Mammary epithelial cell (primary cell): ENCODE measurements at regions of chr17 and their contacts with region 1.

Region 1: GRCh38 chr17:4733073-4733531 is 1.9 kb downstream of the MED11 start:
- DNase-seq: no peak
- H3K4me3 ChIP-seq: no peak overlapping the region
- H3K27ac ChIP-seq: no peak overlapping the region
- H3K4me1 ChIP-seq: peaks cover 5% of the 10 kb centered on the region
- H3K27me3 ChIP-seq: no peaks in the 10 kb centered on the region
- CTCF ChIP-seq: no peak

Region 2: DNA sequence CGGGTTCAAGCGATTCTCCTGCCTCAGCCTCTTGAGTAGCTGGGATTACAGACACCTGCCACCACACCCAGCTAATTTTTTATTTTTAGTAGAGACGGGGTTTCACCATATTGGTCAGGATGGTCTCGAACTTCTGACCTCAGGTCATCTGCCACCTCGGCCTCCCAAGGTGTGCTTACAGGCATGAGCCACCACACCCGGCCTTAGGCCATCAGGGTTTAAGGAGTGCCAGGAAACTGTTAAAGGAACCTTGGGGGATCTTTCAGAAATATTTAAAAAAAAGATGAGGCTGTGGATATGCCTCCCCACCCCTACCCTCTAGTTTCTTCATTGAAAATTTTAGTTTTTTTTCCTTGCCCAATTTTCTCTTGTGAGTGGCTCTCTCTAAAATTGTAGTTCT is 335.3 kb before region 1 on chr17:
- CTCF ChIA-PET with region 1: no interaction called
- dilution Hi-C with region 1: no loop called
- in situ Hi-C with region 1: no loop called
- intact Hi-C with region 1: no loop called
- DNase-seq: no peak
- H3K4me3 ChIP-seq: no peak overlapping the region
- H3K27ac ChIP-seq: no peak overlapping the region
- H3K4me1 ChIP-seq: peaks cover 24% of the 10 kb centered on the region
- H3K27me3 ChIP-seq: no peaks in the 10 kb centered on the region
- CTCF ChIP-seq: no peak

Region 3: GRCh38 chr17:4610162-4610561 is 122.9 kb before region 1 on chr17:
- CTCF ChIA-PET with region 1: no interaction called
- dilution Hi-C with region 1: no loop called
- in situ Hi-C with region 1: no loop called
- intact Hi-C with region 1: no loop called
- DNase-seq: no peak
- H3K4me3 ChIP-seq: no peak overlapping the region
- H3K27ac ChIP-seq: no peak overlapping the region
- H3K4me1 ChIP-seq: no peaks in the 10 kb centered on the region
- H3K27me3 ChIP-seq: peaks cover 2% of the 10 kb centered on the region
- CTCF ChIP-seq: no peak

Region 4: DNA sequence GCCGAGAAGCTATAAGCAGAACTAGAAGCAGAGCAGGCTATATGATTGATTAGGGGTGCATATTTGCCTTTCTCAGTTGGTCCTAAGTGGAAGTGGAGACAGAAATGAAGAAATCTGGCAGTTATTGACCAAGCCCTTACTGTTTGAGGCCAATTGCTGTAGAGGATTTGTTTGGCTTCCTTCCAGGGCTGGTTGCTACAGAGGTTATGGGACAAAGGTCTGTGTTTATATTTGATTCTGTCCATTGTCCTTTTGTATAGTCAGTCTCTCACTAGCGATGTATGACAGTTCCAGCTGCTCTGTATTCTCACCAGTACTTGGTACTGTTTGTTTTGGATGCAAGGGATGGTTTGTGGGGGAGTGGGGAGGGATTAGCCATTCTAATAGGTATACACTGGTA is 84.4 kb before region 1 on chr17:
- CTCF ChIA-PET with region 1: no interaction called
- dilution Hi-C with region 1: loop called (anchors 5 kb)
- in situ Hi-C with region 1: no loop called
- intact Hi-C with region 1: no loop called
- DNase-seq: no peak
- H3K4me3 ChIP-seq: no peak overlapping the region
- H3K27ac ChIP-seq: no peak overlapping the region
- H3K4me1 ChIP-seq: no peaks in the 10 kb centered on the region
- H3K27me3 ChIP-seq: peaks cover 5% of the 10 kb centered on the region
- CTCF ChIP-seq: no peak

Region 5: DNA sequence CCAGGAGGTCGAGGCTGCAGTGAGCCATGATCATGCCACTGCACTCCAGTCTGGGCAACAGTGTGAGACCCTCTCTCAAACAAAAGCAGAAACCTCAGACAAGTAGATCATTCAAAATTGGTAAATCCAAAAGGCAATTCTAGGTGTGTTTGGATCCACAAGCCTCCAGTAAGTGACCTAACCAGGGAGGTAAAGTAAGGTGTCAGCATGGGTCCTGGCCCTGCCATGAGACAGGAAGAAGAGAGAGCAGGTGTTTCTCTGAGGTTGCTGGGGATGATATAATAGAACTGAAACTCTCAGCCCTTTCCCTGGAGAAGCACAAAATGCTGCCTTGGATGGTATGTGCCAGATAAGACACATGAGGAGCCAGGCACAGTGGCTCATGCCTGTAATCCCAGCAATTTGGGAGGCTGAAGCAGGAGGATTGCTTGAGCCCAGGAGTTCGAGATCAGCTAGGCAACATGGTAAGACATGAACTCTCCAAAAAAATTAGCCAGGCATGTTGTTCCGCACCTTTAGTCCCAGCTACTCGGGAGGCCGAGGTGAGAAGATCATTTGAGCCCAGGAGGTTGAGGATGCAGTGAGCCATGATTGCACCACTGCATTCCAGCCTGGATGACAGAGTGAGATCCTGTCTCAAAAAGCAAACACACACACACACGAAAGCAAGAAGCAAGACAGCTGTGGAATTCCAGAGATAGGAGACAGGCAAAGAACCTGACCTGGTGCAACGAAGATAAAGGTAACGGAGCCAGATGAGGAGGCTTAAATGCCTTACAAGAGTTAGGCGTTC is 45.1 kb after region 1 on chr17:
- CTCF ChIA-PET with region 1: no interaction called
- dilution Hi-C with region 1: loop called (anchors 5 kb)
- in situ Hi-C with region 1: no loop called
- intact Hi-C with region 1: no loop called
- DNase-seq: no peak
- H3K4me3 ChIP-seq: no peak overlapping the region
- H3K27ac ChIP-seq: no peak overlapping the region
- H3K4me1 ChIP-seq: no peaks in the 10 kb centered on the region
- H3K27me3 ChIP-seq: no peaks in the 10 kb centered on the region
- CTCF ChIP-seq: no peak

Region 6: DNA sequence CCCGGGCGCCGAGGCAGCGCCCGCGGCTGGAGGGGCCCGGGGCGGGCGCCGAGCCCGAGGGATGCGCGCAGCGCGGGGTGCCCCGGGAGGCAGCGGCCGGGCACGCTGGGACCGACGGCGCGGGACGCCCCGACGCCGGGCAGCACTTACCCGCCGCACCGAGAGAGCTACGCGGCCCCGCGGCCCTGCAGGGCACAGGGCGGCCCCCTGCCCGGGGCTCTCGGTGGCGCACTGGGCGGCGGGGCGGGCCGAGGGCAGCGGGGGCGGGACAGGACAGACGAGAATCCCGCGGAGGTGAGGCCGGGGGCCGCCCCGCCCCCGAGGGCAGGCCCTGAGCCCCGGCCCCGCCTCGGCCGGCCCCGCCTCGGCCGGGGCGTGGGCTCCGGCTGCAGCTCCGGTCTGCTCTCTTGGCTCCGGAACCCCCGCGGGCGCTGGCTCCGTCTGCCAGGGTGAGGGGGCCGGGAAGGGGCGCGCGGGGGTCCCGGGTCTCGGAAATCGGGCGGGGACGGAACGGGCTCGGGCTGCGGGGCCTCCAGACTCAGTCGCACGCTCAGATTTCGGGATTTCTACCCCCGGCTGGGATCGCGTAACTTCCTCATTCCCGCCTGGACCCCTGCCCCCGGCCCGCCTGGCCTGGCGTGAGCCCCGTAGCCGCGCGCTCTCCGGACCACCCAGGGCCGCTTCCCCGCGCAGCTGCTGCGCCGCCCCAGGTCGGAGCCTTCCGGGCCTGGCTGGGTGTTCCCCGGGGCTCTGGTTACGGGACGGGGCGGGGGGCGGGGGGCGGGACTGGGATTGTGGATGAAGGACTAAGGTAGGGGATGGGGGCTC is 73.9 kb after region 1 on chr17 and contains the start of gene PLD2:
- CTCF ChIA-PET with region 1: no interaction called
- dilution Hi-C with region 1: no loop called
- in situ Hi-C with region 1: no loop called
- intact Hi-C with region 1: loop called (anchors 1 kb)
- DNase-seq: peak; percentile 79
- H3K4me3 ChIP-seq: peak within 1 kb of the TSS; percentile 75 to 94 (median 83)
- H3K27ac ChIP-seq: peak within 1 kb of the TSS; percentile 22
- H3K4me1 ChIP-seq: peaks cover 15% of the 10 kb centered on the region
- H3K27me3 ChIP-seq: no peaks in the 10 kb centered on the region
- CTCF ChIP-seq: no peak
- total RNA-seq, gene PLD2: 22.2 to 42.9 TPM

Region 7: DNA sequence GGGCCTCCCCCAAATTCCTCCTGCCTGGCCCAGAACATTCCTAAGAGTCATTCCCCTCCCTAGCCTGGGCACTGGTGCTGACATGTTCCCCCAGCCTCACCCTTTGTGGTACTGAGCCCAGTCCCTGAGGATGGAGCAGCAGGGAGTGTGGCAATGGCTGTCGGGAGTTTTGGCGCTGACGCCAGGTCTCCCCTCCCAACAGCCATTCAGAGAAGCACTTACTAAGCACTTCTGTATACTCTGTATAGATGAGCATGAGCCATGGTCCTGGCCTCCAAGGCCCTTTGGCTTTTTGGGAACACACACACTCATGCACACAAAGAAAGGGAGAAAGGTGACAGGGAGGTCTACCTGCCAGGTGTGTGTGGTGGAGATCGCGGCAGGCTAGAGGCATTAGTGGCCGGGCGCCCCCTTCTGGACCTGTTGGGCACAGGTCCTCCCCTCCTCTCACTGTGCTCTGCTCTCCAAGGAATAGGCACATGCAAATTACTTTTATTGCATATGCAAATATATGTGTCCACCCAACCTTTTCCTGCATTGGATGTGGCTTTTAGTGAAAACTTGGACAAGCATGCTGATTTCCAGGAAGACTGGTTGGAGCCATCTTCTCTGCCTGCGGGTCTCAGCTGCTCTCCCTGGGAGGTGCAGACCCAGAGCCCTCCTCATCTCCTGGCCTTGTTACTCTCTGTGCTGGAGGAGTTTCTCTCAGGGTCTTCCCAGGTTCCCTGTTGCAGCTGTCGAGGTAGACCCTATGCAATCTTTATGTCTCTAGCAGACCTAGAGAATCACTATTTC is 148.9 kb after region 1 on chr17:
- CTCF ChIA-PET with region 1: interaction called, 3 read pairs
- dilution Hi-C with region 1: no loop called
- in situ Hi-C with region 1: loop called (anchors 10 kb)
- intact Hi-C with region 1: loop called (anchors 1 kb)
- DNase-seq: peak; percentile 63
- H3K4me3 ChIP-seq: no peak overlapping the region
- H3K27ac ChIP-seq: no peak overlapping the region
- H3K4me1 ChIP-seq: peaks cover 5% of the 10 kb centered on the region
- H3K27me3 ChIP-seq: no peaks in the 10 kb centered on the region
- CTCF ChIP-seq: peak; percentile 88 to 91

Region 8: GRCh38 chr17:4903051-4903818 is 170.1 kb after region 1 on chr17 and contains the start of gene CHRNE:
- CTCF ChIA-PET with region 1: interaction called, 3 read pairs
- dilution Hi-C with region 1: no loop called
- in situ Hi-C with region 1: no loop called
- intact Hi-C with region 1: loop called (anchors 1 kb)
- DNase-seq: peak; percentile 73
- H3K4me3 ChIP-seq: no peak within 1 kb of the TSS
- H3K27ac ChIP-seq: no peak within 1 kb of the TSS
- H3K4me1 ChIP-seq: peaks cover 15% of the 10 kb centered on the region
- H3K27me3 ChIP-seq: no peaks in the 10 kb centered on the region
- CTCF ChIP-seq: peak; percentile 80 to 81
- total RNA-seq, gene CHRNE: under 0.01 TPM in 1 of 2 donors, not detected in the other